ENCODE measurements at regions of chr12 and their contacts with region 1.

Region 1: DNA sequence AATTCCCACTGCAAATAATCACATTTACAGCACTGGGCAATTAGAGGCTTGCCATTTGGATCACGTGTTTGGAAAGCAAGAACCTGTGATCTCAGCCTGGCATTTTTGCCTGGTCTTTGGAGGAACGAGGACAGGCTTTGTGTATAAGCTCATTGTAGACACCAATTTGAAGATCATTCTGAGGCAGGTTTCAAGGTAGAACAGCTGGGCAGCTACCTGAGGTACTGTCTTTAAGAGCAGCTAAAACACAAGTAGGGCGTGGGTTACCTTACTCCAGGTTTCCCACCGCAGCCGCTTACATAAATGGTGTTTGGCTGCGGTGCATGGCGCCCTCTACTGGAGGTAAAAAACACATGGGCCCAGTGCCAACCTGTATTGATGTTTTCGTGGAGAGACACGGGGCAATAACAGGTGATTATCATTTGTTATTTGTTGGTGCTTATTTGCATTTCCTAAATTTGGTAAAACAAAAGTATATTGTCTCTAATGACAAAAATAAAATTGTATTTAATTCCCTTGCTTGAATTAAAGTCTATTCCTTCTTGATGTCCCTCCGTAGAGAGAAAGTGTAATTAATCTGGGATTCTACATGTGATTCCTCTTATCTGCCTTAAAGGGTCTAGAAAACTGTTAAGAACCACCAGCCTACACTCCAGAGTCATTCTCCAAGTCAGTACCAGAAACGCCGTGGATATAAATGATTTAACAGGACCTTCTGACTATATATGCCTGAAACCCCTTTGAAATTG is 69.7 kb downstream of the SVOP start:
- H3K4me3 Mint-ChIP-seq: no peak overlapping the region
- H3K27ac Mint-ChIP-seq: no peak overlapping the region
- H3K4me1 Mint-ChIP-seq: peaks cover 26% of the 10 kb centered on the region
- H3K27me3 Mint-ChIP-seq: peaks cover 15% of the 10 kb centered on the region

Region 2: DNA sequence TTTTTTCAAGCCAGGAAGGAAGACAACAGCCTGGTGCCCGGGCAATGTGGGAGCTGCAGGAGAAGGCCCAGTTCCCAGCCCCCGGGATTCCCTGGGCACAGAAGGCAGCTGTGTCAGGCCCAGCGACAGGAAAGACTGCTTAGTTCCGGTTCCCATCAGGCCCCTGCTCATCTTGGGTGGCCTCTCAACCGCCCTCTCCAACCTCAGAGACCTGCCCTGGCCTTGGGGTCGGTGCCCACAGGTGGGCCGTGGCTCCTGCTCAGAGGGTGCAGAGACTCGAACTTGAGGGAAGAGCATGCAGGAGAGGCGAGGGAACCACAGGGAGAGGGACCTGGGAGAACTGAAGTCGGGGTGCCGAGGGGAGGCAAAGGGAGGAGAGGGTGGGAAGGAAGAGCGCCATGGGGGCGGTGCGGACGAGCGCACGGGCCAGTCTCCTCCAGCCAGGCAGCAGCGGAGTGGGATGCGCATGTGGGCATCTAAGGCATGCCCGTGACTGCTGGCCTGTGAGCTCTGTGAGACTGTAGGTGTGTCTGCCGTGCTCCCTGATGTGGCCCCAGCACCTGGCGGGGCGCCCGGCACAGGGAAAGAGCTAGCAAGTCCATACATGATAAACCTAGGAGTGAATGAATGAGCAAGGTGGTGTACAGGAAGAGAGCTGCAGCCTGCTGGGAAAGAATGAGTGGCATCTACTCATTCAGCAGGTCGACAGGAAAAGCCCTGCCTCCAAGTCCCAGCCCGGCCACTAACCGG is 136.5 kb before region 1 on chr12:
- intact Hi-C with region 1: loop called (anchors 5 kb)
- H3K4me3 Mint-ChIP-seq: no peak overlapping the region
- H3K27ac Mint-ChIP-seq: no peak overlapping the region
- H3K4me1 Mint-ChIP-seq: peaks cover 20% of the 10 kb centered on the region
- H3K27me3 Mint-ChIP-seq: no peaks in the 10 kb centered on the region

Region 3: GRCh38 chr12:108884116-108885012 is 66.8 kb before region 1 on chr12:
- intact Hi-C with region 1: loop called (anchors 1 kb)
- H3K4me3 Mint-ChIP-seq: no peak overlapping the region
- H3K27ac Mint-ChIP-seq: peak overlapping the region; percentile 30
- H3K4me1 Mint-ChIP-seq: peaks cover 11% of the 10 kb centered on the region
- H3K27me3 Mint-ChIP-seq: no peaks in the 10 kb centered on the region